A549 (cell line): ENCODE measurements at regions of chr4 and their contacts with region 1.

Region 1: GRCh38 chr4:7192252-7193029 is at the start of gene SORCS2:
- DNase-seq: peak; percentile 42 to 46
- ATAC-seq: peak; percentile 82 to 84
- H3K4me3 ChIP-seq: peak within 1 kb of the TSS; percentile 56
- H3K27ac ChIP-seq: peak within 1 kb of the TSS; percentile 66 to 96
- H3K4me1 ChIP-seq: peaks cover 12% of the 10 kb centered on the region; the same call in 2 of the 3 replicates
- CTCF ChIP-seq: peak; percentile 78
- EP300 ChIP-seq: no peak
- POLR2A ChIP-seq: no peak
- RAD21 ChIP-seq: peak; percentile 52 to 93; a peak in 4 of 5 replicates
- polyA plus RNA-seq, gene SORCS2: 1.4 and 2.3 TPM in 2 replicates

Region 2: DNA sequence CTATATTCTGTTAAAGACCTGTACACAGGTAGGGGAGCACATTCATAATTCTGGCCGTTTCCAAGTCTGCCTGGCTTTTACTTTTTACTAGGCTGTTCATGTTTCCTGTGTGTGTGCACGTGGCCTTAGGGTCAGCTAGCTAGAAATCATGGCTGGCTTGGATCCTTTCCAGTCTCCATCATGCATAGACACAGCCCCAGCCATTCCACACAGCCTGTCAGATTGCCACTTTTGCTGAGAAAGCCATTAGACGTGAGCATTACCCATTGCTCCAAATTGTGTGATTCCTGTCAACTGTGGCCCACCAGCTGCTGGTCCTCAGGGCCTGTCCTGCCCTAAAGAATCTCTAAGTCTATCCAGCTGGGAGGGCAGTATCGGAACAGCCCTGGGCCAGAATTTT is 11.5 kb before region 1 on chr4:
- CTCF ChIA-PET with region 1: interaction called, 10 read pairs
- POLR2A ChIA-PET with region 1: no interaction called
- DNase-seq: no peak
- ATAC-seq: no peak
- H3K4me3 ChIP-seq: no peak overlapping the region
- H3K27ac ChIP-seq: no peak overlapping the region
- H3K4me1 ChIP-seq: no peaks in the 10 kb centered on the region
- CTCF ChIP-seq: no peak
- EP300 ChIP-seq: no peak
- POLR2A ChIP-seq: no peak
- RAD21 ChIP-seq: no peak

Region 3: GRCh38 chr4:7206911-7207567 is 14.6 kb after region 1 on chr4:
- CTCF ChIA-PET with region 1: interaction called, 23 read pairs
- POLR2A ChIA-PET with region 1: no interaction called
- DNase-seq: peak; percentile 55 to 56
- ATAC-seq: peak; percentile 93 to 94
- H3K4me3 ChIP-seq: no peak overlapping the region
- H3K27ac ChIP-seq: peak overlapping the region; percentile 96
- H3K4me1 ChIP-seq: peaks cover 68% of the 10 kb centered on the region
- CTCF ChIP-seq: no peak
- EP300 ChIP-seq: no peak
- POLR2A ChIP-seq: no peak
- RAD21 ChIP-seq: no peak

Region 4: DNA sequence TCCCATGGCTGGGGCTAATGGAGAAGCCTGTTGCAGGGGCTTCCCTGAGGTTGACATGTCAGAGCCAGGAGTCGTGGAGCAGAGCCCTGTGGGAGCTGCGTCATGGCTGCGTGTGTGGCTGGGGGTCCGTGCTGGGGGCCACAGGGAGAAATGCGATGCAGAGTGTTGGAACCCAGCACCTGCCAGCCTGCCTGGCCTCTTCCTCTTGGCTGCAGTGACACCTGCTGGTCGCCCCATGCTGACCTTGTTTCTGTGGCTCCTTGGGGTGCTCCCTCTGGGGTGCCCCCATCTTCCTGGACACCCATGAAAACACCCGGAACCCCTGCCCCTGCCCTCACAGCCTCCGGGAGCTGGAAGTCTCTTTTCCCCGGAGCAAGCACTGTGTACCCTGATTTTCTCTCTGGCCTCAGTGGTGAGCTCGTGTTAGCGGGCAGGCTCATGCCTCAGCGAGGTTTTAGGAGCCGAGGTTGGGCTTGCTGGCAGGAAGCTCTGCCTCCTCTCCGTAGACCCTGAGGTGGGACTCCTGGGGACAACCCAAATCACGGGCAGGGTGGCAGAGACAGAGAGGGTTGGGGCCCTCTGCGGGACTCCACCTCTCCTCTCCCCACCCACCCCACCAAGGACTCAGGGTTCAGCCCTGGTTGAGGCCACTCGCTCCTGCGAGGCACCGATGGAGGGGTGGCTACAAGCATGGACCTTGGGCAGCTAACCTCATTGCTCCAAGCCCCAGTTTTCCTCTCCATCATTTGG is 103.6 kb after region 1 on chr4:
- CTCF ChIA-PET with region 1: interaction called, 55 read pairs
- POLR2A ChIA-PET with region 1: no interaction called
- DNase-seq: peak; percentile 18 to 45
- ATAC-seq: peak; percentile 59 to 83; a peak in 4 of 6 replicates
- H3K4me3 ChIP-seq: no peak overlapping the region
- H3K27ac ChIP-seq: 0 out of 6 replicates have a peak overlapping the region, but pooled peaks of 1 of the 2 experiments have one; percentile 7
- H3K4me1 ChIP-seq: no peaks in the 10 kb centered on the region
- CTCF ChIP-seq: peak; percentile 65
- EP300 ChIP-seq: no peak
- POLR2A ChIP-seq: no peak
- RAD21 ChIP-seq: peak; percentile 88 to 89

Region 5: GRCh38 chr4:7335344-7336069 is 143.1 kb after region 1 on chr4:
- CTCF ChIA-PET with region 1: interaction called, 11 read pairs
- POLR2A ChIA-PET with region 1: no interaction called
- DNase-seq: peak; percentile 58 to 69
- ATAC-seq: peak; percentile 72 to 89; a peak in 4 of 6 replicates
- H3K4me3 ChIP-seq: no peak overlapping the region
- H3K27ac ChIP-seq: peak overlapping the region in 1 of 2 experiments; percentile 54; a peak in 3 of 6 replicates
- H3K4me1 ChIP-seq: peaks cover 21% of the 10 kb centered on the region
- CTCF ChIP-seq: peak; percentile 48
- EP300 ChIP-seq: no peak
- POLR2A ChIP-seq: no peak
- RAD21 ChIP-seq: peak; percentile 64 to 65